GM10248 (cell line): ENCODE measurements at regions of chr14 and their contacts with region 1.

Region 1: GRCh38 chr14:72060917-72061316 is 128.7 kb downstream of the RGS6 start:
- DNase-seq: no peak
- CTCF ChIP-seq: no peak

Region 2: GRCh38 chr14:71956920-71957563 is 103.9 kb before region 1 on chr14:
- CTCF ChIA-PET with region 1: no interaction called
- POLR2A ChIA-PET with region 1: no interaction called
- DNase-seq: peak; percentile 18
- CTCF ChIP-seq: no peak

Region 3: GRCh38 chr14:72023722-72024407 is 37.1 kb before region 1 on chr14:
- CTCF ChIA-PET with region 1: interaction called, 10 read pairs
- POLR2A ChIA-PET with region 1: no interaction called
- DNase-seq: peak; percentile 30
- CTCF ChIP-seq: peak; percentile 59